Esophagus squamous epithelium (tissue), 5 donors: ENCODE measurements at regions of chr16 and their contacts with region 1.

Region 1: GRCh38 chr16:19094541-19095365 is 19.0 kb upstream of the ITPRIPL2 start:
- DNase-seq: no peak
- H3K4me3 ChIP-seq: no peak overlapping the region
- H3K27ac ChIP-seq: no peak overlapping the region
- H3K4me1 ChIP-seq: peaks cover 0 to 15% (median 0%) of the 10 kb centered on the region in 3 donors
- H3K27me3 ChIP-seq: no peaks in the 10 kb centered on the region
- CTCF ChIP-seq: no peak
- POLR2A ChIP-seq: no peak

Region 2: GRCh38 chr16:19005561-19006445 is 89.0 kb before region 1 on chr16:
- intact Hi-C with region 1: no loop called
- DNase-seq: peak; percentile 20
- H3K4me3 ChIP-seq: no peak overlapping the region
- H3K27ac ChIP-seq: peak overlapping the region; percentile 49 to 75 (median 70)
- H3K4me1 ChIP-seq: peaks cover 4 to 29% (median 18%) of the 10 kb centered on the region in 3 donors
- H3K27me3 ChIP-seq: no peaks in the 10 kb centered on the region
- CTCF ChIP-seq: no peak
- POLR2A ChIP-seq: no peak

Region 3: DNA sequence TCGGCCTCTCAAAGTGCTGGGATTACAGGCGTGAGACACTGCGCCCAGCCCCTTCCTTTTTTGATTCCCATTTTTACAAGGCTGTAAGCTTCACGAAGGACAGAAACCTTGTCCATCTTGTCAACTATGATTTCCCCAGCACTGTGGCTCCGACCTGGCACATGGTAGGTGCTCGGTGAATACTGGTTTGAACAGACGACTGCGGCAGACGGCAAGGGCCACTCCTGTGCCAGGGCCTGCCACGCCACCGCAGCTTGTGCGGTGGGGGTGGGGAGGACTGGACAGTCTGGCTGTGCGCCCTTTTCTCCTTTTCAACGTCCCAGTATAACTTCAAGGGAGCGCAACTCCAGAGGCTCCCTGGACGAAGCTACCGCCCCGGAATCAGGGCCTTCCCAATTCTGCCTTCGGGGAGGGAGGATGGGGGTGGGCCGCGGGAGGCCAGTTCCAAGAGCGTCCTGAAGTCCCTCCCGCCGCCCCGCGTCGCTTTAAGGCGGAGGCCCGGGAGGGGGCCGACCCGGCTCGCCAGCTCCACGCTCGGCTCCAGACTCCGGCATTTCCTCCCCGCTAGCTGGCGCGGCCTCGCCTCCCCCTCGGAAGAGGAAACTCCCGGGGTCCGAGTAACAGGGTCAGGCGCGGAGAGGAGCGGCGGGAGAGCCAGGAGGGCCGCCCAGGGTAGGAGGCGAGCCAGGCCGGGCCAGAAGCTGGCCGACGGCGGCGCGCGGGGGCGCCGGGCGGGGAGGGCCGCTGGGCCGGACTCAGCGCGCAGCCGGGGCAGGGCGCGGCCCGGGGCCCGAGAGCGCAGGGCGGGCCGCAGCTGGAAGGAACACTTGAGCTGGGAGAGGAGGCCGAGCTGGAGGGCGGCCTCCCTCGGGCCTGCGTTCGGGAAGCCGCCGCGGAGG is 18.9 kb after region 1 on chr16 and contains the start of gene ITPRIPL2:
- intact Hi-C with region 1: no loop called
- DNase-seq: no peak
- H3K4me3 ChIP-seq: peak within 1 kb of the TSS; percentile 69 to 97 (median 76)
- H3K27ac ChIP-seq: peak within 1 kb of the TSS; percentile 89 to 99 (median 98)
- H3K4me1 ChIP-seq: peaks cover 43 to 63% (median 50%) of the 10 kb centered on the region in 3 donors
- H3K27me3 ChIP-seq: no peaks in the 10 kb centered on the region
- CTCF ChIP-seq: peak in 1 of 6 experiments; percentile 6
- POLR2A ChIP-seq: peak in 2 of 4 donors; percentile 76 to 79
- total RNA-seq, gene ITPRIPL2: 18.3 to 78.6 (median 42.4) TPM

Region 4: DNA sequence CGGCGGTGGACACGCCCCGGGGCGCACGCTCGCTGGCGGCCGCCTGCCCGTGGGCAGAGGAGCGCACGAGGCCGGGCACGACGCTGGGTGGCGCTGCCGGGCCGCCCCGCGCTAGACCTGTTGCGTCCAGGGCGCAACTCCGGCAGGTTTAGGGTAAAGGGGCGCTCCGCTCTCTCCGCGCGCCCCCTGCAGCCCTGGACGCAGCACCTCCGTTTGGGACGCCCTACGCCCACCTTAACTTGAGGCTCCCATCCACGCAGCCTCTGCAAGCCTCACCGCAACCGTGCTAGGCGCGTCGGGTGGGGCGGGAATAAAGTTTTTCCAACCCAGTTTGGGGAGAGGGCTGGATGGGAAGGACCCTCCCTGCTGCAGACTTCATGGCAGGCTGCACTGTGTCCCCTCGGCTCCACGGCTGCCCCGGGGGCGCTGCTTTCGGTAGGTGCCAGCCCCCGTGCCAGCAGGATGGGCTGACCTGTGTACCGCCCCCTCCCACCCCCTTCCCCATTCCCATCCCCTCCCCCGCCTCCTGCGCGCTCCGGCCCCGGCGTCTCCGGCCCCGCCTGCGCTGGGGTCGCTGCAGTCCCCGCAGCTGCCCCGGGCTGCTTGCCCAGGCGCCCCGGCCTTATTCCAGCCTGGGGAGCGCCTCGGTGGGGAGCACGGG is 73.1 kb after region 1 on chr16 and contains the start of gene SYT17:
- intact Hi-C with region 1: loop called (anchors 5 kb)
- DNase-seq: no peak
- H3K4me3 ChIP-seq: peak within 1 kb of the TSS; percentile 53 to 78 (median 66)
- H3K27ac ChIP-seq: peak within 1 kb of the TSS; percentile 46 to 72 (median 66)
- H3K4me1 ChIP-seq: peaks cover 17 to 31% (median 17%) of the 10 kb centered on the region in 3 donors
- H3K27me3 ChIP-seq: peaks cover 0 to 31% (median 0%) of the 10 kb centered on the region in 4 donors
- CTCF ChIP-seq: peak; percentile 69 to 88 (median 84)
- POLR2A ChIP-seq: no peak
- total RNA-seq, gene SYT17: 0.88 to 7.6 (median 4.7) TPM

Region 5: DNA sequence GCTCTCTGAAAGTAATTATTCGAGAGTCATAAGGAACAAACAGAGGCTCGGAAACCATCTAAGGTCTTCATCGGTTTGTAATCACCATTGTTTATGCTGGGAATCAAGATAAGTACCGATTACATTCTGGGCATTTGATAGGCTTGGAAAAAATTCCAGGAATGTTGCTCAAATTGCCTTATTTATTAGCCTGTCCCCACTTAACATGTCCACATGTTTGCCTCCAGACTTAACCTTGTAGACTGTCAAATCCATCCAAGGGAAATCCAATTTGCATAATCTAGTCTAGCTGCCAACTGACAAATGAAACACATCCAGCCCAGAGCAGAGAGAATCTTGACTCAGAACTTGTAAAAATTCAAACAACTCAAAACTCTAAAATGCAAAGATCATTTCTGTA is 271.6 kb after region 1 on chr16:
- intact Hi-C with region 1: loop called (anchors 5 kb)
- DNase-seq: no peak
- H3K4me3 ChIP-seq: no peak overlapping the region
- H3K27ac ChIP-seq: no peak overlapping the region
- H3K4me1 ChIP-seq: no peaks in the 10 kb centered on the region
- H3K27me3 ChIP-seq: no peaks in the 10 kb centered on the region
- CTCF ChIP-seq: no peak
- POLR2A ChIP-seq: no peak